ENCODE measurements at regions of chr2 and their contacts with region 1.

Region 1: GRCh38 chr2:172172513-172173173 is 69.9 kb upstream of the DLX2 start:
- DNase-seq: peak; percentile 43
- ATAC-seq: peak; percentile 100
- H3K4me3 ChIP-seq: peak overlapping the region; percentile 55 to 84 (median 62)
- H3K27ac ChIP-seq: no peak overlapping the region
- H3K4me1 ChIP-seq: peaks cover 6% of the 10 kb centered on the region
- H3K27me3 ChIP-seq: peaks cover 3 to 22% of the 10 kb centered on the region in 2 experiments; a peak in 4 of 5 replicates
- CTCF ChIP-seq: peak; percentile 96
- EP300 ChIP-seq: no peak
- POLR2A ChIP-seq: no peak
- RAD21 ChIP-seq: peak; percentile 100

Region 2: GRCh38 chr2:171957061-171957460 is 215.6 kb before region 1 on chr2:
- CTCF ChIA-PET with region 1: no interaction called
- POLR2A ChIA-PET with region 1: no interaction called
- in situ Hi-C with region 1: no loop called
- intact Hi-C with region 1: no loop called
- DNase-seq: peak; percentile 24
- ATAC-seq: peak; percentile 68
- H3K4me3 ChIP-seq: no peak overlapping the region
- H3K27ac ChIP-seq: no peak overlapping the region
- H3K4me1 ChIP-seq: peaks cover 12% of the 10 kb centered on the region; the same call in 1 of the 2 replicates
- H3K27me3 ChIP-seq: no peaks in the 10 kb centered on the region
- CTCF ChIP-seq: peak; percentile 67
- EP300 ChIP-seq: no peak
- POLR2A ChIP-seq: no peak
- RAD21 ChIP-seq: peak; percentile 56

Region 3: DNA sequence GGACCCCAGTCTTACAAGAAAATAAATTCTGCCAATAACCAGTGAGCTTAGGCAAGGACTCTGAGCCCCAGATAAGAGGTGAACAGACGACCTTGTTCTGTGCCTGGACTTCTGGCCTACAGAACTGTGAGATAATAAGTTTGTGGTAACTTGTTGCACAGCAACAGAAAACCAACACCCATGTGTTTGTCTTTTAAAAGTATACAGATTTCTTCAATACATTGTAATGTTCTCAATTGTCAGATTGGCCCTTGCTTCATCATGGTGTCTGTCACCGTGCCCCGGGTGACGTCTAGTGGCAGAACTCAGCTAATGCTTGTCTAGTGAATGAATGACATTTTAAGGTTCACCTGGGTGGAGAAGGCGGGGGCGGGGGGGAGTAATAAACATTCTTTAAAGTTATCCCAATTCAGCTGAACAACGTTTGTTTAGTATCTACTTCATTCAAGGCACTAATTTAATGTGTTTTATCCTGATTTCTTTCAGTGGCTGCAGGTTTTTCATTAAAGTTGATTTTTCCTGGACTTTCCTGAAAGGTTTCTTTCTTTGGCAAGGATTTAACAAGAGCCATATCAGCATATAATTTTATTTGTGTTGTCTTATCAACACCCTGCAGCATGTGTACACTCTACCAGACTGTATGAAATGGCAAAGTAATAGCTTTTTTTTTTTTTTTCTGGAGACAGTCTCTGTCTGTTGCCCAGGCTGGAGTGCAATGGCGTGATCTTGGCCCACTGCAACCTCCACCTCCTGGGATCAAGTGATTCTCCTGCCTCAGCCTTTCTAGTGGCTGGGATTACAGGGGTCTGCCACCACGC is 53.8 kb after region 1 on chr2:
- CTCF ChIA-PET with region 1: no interaction called
- POLR2A ChIA-PET with region 1: no interaction called
- in situ Hi-C with region 1: no loop called
- intact Hi-C with region 1: loop called (anchors 2 kb)
- DNase-seq: peak; percentile 63
- ATAC-seq: peak; percentile 88
- H3K4me3 ChIP-seq: no peak overlapping the region
- H3K27ac ChIP-seq: no peak overlapping the region
- H3K4me1 ChIP-seq: peaks cover 15% of the 10 kb centered on the region; the same call in 1 of the 2 replicates
- H3K27me3 ChIP-seq: peaks cover 1 to 25% of the 10 kb centered on the region in 2 experiments; a peak in 4 of 5 replicates
- CTCF ChIP-seq: peak; percentile 64
- EP300 ChIP-seq: no peak; a peak in 1 of 4 replicates
- POLR2A ChIP-seq: no peak
- RAD21 ChIP-seq: no peak

Region 4: GRCh38 chr2:172484253-172484652 is 311.6 kb after region 1 on chr2:
- CTCF ChIA-PET with region 1: interaction called, 11 read pairs
- POLR2A ChIA-PET with region 1: interaction called, 3 read pairs
- in situ Hi-C with region 1: no loop called
- intact Hi-C with region 1: loop called (anchors 5 kb)
- DNase-seq: peak; percentile 41
- ATAC-seq: no peak
- H3K4me3 ChIP-seq: no peak overlapping the region
- H3K27ac ChIP-seq: no peak overlapping the region
- H3K4me1 ChIP-seq: peaks cover 42% of the 10 kb centered on the region
- H3K27me3 ChIP-seq: no peaks in the 10 kb centered on the region
- CTCF ChIP-seq: peak; percentile 58
- EP300 ChIP-seq: no peak
- POLR2A ChIP-seq: no peak
- RAD21 ChIP-seq: peak; percentile 53; the same call in 1 of the 2 replicates

Region 5: DNA sequence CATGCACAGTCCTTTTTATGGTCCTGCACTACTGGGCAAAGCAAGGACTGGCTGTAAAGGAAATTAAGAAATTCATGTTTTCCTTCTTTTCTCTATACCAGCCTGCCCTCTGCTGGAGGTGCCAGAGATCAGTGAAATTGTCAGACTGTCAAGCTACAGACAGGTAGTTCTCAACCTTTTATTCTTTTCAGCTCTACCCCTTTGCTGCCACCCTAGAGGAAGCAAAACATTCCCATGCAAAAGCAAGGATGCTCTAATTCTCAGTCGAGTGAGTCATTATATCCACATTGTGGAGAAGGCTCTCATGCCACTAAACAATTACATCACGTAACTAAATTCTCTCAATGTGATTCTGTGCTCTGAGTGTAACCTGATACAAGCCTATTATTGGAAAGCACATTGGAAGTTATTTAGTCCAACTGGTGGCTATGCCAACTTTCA is 538.0 kb after region 1 on chr2:
- CTCF ChIA-PET with region 1: interaction called, 3 read pairs
- POLR2A ChIA-PET with region 1: no interaction called
- in situ Hi-C with region 1: no loop called
- intact Hi-C with region 1: loop called (anchors 2 kb)
- DNase-seq: peak; percentile 25
- ATAC-seq: peak; percentile 60
- H3K4me3 ChIP-seq: no peak overlapping the region
- H3K27ac ChIP-seq: no peak overlapping the region
- H3K4me1 ChIP-seq: no peaks in the 10 kb centered on the region
- H3K27me3 ChIP-seq: peaks cover 0 to 5% of the 10 kb centered on the region in 2 experiments; a peak in 2 of 5 replicates
- CTCF ChIP-seq: peak; percentile 72
- EP300 ChIP-seq: no peak
- POLR2A ChIP-seq: no peak
- RAD21 ChIP-seq: peak; percentile 25; the same call in 1 of the 2 replicates